Sigmoid colon (tissue), 7 donors: ENCODE measurements at regions of chr20 and their contacts with region 1.

Region 1: DNA sequence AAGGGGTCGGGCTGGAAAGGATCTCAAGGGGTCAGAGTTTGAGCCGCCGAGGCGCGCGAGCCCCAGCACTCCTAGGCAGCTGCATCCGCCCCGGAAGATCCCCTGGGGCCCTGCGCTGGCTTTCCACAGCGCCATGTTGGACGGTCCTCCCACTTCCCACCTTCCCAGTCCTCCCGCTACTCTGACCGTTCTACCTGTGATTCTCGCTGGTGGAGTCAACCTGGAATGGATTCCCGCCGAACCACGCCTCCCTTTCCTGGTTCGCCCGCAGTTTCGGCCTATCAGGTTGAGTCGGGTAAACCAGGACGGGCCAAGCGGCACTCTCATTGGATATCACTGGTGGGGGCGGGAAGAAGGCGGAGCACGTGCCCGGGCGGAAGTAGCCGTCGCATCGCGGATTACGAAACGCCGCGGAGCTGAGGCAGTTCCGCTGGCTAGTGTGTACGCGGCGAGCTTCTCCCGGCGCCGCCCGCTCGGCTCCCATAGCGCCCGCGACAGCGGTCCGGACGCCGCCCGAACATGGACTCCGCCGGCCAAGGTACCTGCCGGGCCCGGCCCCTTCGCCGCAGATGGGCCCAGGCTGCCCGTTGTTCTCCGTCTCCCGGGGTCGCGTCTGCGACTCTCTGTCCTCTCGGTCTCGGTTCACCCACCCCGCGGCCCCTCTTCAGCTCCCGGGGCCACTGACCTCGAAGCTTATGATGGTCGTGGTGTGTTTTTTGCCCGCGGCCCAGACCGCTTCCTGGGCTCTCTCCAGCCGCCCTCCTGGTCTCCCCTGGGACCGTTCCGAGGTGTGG is at the start of gene TPD52L2:
- DNase-seq: peak; percentile 99
- H3K4me3 ChIP-seq: peak within 1 kb of the TSS; percentile 84 to 96 (median 86)
- H3K27ac ChIP-seq: peak within 1 kb of the TSS; percentile 93 to 98 (median 94)
- H3K4me1 ChIP-seq: peaks cover 4 to 44% (median 25%) of the 10 kb centered on the region in 4 donors
- H3K27me3 ChIP-seq: no peaks in the 10 kb centered on the region
- CTCF ChIP-seq: no peak
- EP300 ChIP-seq: peak in 2 of 4 donors; percentile 27 to 37
- POLR2A ChIP-seq: peak; percentile 61 to 83
- total RNA-seq, gene TPD52L2: 84.7 to 109 (median 104) TPM

Region 2: DNA sequence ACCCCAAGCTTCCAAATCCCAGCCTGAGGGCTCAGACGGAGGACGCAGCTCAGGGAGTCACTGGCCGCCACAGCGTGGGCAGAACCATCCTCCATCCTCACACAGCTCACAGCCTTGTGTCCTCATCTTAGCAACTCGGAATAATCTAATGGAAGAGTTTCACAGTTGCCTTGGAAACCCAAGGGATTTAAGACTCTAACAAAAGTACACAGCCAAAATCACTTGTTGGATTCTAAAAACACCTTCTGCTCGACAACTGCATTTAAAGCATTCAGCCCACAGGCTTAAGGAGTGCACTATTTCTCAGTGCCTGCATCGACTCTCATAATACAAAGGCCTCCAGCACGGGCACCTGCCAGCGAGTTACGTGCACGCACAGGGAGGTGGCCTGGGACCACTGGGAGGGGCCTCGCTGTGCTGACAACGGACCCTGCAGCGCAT is 79.3 kb before region 1 on chr20:
- intact Hi-C with region 1: loop called (anchors 5 kb)
- DNase-seq: no peak
- H3K4me3 ChIP-seq: no peak overlapping the region
- H3K27ac ChIP-seq: no peak overlapping the region
- H3K4me1 ChIP-seq: no peaks in the 10 kb centered on the region
- H3K27me3 ChIP-seq: no peaks in the 10 kb centered on the region
- CTCF ChIP-seq: no peak
- EP300 ChIP-seq: no peak
- POLR2A ChIP-seq: no peak

Region 3: DNA sequence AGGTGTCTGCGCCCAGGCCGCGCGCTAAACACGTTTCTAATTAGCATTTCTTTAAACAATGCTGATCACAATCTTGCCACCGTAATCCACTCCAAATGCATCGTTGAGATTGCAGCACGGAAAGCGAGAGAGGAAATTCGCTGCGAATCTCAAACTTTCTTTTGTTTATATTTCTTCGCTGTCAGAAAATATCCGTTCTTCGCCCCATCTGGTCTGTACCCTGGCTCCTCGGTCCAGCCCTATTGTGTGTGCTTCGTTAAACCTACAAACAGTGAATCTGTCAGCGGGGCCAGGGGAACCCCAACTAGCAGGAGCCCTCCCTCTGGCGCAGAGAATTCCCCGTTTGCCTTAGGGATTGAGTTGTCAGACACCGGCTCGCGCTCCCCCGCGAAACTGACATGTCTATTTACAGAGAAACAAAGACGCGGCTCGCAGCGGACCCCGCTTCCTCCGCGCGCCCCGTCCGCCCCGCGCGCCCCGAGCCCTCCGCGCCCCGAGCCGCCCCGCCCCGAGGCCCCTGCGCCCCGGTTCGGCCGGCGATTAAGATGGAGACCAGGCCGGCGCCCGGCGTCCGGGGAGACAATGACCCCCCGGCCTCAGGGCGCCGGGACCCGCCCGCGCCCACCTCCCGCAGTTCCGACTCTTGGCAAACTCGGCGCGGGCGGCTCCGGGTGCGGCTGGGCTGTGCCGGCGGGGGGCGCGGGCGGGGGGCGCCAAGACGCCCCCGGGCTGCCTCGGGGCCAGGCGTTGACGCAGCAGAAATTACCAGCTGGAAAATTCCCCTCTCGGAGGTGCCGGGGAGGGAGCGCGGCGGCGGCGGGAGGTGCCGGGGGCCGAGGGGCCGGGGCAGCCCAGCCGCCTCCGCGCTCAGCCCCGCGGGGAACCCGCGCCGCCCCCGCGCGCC is 34.9 kb before region 1 on chr20:
- intact Hi-C with region 1: loop called (anchors 5 kb)
- DNase-seq: no peak
- H3K4me3 ChIP-seq: peak overlapping the region; percentile 32 to 66 (median 56)
- H3K27ac ChIP-seq: peak overlapping the region; percentile 43 to 73 (median 68)
- H3K4me1 ChIP-seq: peaks cover 0 to 32% (median 24%) of the 10 kb centered on the region in 4 donors
- H3K27me3 ChIP-seq: peaks cover 20 to 62% (median 49%) of the 10 kb centered on the region in 3 donors
- CTCF ChIP-seq: no peak
- EP300 ChIP-seq: no peak
- POLR2A ChIP-seq: no peak

Region 4: GRCh38 chr20:63894358-63895201 is 29.5 kb after region 1 on chr20 and contains the start of gene DNAJC5:
- intact Hi-C with region 1: loop called (anchors 2 kb)
- DNase-seq: peak; percentile 97
- H3K4me3 ChIP-seq: peak within 1 kb of the TSS; percentile 48 to 69 (median 62)
- H3K27ac ChIP-seq: peak within 1 kb of the TSS; percentile 76 to 87 (median 79)
- H3K4me1 ChIP-seq: peaks cover 0 to 36% (median 31%) of the 10 kb centered on the region in 4 donors
- H3K27me3 ChIP-seq: no peaks in the 10 kb centered on the region
- CTCF ChIP-seq: no peak
- EP300 ChIP-seq: no peak
- POLR2A ChIP-seq: no peak
- total RNA-seq, gene DNAJC5: 25.0 to 36.4 (median 31.2) TPM